Heart left ventricle (tissue), 16 donors: ENCODE measurements at regions of chr5 and their contacts with region 1.

Region 1: DNA sequence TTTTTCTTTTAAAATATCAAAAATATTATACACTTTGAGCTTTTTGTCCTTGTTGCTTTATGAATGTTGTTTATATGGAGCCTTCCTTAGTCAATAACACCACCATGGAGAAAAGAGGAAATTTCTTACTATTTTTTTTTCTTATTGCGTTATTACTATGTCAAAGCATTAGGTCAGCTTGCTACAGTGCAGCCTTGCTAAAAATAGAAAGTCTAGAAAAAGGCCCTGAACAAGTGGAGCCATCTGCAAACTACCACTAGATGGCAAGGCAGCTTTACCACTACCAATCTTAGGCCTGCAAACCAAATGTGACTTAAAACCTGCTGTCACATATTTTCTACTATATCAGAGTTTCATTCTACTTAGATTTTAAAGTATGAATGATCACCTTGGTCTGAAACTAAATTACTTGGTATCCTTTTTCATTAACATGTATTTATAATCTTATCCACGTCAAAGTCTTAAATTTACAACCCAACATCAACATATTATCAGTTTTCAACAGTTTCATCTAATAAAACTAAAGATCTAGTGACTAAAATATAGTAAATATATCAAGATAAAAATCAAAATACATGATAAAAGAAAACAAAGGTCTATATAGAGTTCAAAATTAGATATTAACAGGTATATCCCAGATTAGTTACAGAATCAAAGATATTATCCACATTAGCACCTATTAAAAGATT is 113.1 kb upstream of the ACOT12 start:
- DNase-seq: peak in 4 of 5 donors; percentile 46 to 71 (median 56)
- ATAC-seq: peak; percentile 98 to 100 (median 99)
- H3K4me3 ChIP-seq: peak overlapping the region in 1 of 12 donors; percentile 3
- H3K27ac ChIP-seq: peak overlapping the region in 10 of 12 donors; percentile 17 to 68 (median 40)
- H3K4me1 ChIP-seq: peaks cover 0 to 25% (median 16%) of the 10 kb centered on the region in 12 donors
- H3K27me3 ChIP-seq: no peaks in the 10 kb centered on the region
- CTCF ChIP-seq: peak; percentile 76 to 98 (median 84)
- POLR2A ChIP-seq: no peak

Region 2: DNA sequence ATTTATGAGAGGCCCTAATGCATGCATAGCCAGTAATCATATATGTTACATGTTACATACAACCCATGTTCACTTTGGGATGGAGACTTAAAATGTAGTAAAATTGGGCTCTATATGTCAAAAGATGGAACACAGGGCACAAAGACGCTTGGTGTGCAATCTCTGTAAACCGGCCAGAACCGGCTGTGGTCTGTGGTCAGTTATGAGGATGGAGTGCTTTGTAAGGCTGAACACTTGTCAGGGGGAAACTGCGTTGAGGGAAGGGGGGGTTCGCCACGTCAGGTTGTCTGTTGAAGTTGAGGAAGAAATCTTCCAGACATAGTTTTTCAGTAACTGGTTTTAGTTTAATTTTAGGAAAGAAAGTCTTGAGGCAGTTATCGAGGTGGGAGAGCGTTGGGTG is 276.6 kb before region 1 on chr5:
- intact Hi-C with region 1: no loop called
- DNase-seq: no peak
- ATAC-seq: no peak
- H3K4me3 ChIP-seq: no peak overlapping the region
- H3K27ac ChIP-seq: no peak overlapping the region
- H3K4me1 ChIP-seq: peaks cover 0 to 36% (median 22%) of the 10 kb centered on the region in 12 donors
- H3K27me3 ChIP-seq: no peaks in the 10 kb centered on the region
- CTCF ChIP-seq: no peak
- POLR2A ChIP-seq: no peak

Region 3: GRCh38 chr5:81425569-81425968 is 81.5 kb before region 1 on chr5:
- intact Hi-C with region 1: loop called in 1 of 10 experiments (anchors 5 kb)
- DNase-seq: no peak
- ATAC-seq: peak in 3 of 4 donors; percentile 35 to 62 (median 59)
- H3K4me3 ChIP-seq: no peak overlapping the region
- H3K27ac ChIP-seq: peak overlapping the region in 4 of 12 donors; percentile 1 to 28 (median 7)
- H3K4me1 ChIP-seq: peaks cover 4 to 26% (median 12%) of the 10 kb centered on the region in 12 donors
- H3K27me3 ChIP-seq: no peaks in the 10 kb centered on the region
- CTCF ChIP-seq: peak; percentile 56 to 82 (median 66)
- POLR2A ChIP-seq: no peak

Region 4: DNA sequence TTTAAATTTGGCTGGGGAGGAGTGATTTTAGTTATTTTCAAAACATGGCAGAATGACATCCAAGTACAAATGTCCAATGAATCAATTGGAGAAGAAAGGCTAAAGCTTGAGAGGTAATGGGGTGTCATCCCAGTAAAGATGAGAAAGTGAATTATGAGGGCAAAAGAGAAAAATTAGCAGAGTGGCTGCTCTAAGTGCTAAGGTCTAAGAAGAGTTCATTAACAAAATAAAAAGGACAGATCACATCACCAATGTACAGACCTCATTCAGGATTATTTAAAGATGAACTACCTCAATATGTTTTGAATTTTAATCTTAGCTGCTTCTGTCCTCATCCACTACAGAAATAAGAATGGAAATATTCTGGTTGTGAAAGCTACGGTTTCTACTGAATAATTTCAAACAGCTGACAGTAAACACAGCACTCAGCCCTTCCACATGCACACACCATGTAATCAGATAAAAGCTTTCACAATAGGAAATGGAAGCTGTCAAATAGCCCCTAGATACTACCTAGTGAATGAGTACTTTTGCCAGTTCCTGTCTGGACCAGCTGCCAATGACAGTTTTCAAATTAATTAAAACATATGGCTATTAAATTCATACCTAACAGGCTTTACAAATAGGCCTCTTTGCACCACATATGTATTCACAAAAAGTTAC is 72.3 kb after region 1 on chr5:
- intact Hi-C with region 1: no loop called
- DNase-seq: no peak
- ATAC-seq: peak in 3 of 4 donors; percentile 60 to 66 (median 66)
- H3K4me3 ChIP-seq: no peak overlapping the region
- H3K27ac ChIP-seq: no peak overlapping the region
- H3K4me1 ChIP-seq: peaks cover 0 to 15% (median 1%) of the 10 kb centered on the region in 12 donors
- H3K27me3 ChIP-seq: no peaks in the 10 kb centered on the region
- CTCF ChIP-seq: no peak
- POLR2A ChIP-seq: no peak

Region 5: DNA sequence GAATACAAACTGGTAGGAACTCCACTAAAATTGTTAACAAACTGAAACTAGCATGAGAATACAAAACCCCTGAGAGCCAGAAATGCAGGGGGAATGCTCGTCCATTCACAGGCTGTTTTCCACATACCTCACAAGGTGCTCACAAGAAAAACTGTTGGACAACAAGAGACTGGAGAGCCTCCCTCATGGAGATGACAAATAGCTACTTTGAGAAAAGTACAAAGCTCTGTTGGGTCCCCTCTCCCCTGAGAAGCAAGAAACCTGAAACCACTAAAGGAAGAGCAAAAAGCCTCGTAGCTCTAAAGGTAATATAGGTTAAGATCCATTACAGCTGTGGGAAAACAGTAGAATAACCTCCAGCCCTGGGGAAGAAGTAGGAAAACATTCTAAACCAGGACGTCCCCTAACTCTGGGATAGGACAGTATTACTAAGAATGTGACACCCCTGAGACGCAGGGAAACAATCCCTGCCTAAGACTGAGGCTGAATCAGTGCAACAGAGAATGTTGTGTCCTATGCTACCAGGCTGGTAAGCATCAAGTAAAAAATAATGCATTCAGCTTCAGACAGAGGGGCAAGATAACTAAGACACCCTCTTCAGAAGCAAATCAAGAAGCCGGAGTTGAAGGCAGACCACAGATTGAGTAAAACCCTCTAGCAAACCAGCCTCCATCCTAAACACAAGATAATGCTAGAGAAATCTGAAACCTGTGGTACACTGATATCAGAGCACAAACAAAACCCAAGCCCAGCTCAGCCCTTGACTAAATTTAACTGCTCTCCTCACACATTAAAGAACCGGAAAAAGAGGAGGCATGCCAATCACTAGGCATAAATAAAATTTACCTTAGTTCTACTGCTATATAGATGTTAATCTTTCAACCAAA is 83.7 kb after region 1 on chr5:
- intact Hi-C with region 1: no loop called
- DNase-seq: no peak
- ATAC-seq: peak; percentile 64 to 82 (median 72)
- H3K4me3 ChIP-seq: no peak overlapping the region
- H3K27ac ChIP-seq: peak overlapping the region in 3 of 12 donors; percentile 25 to 41 (median 40)
- H3K4me1 ChIP-seq: peaks cover 0 to 18% (median 0%) of the 10 kb centered on the region in 12 donors
- H3K27me3 ChIP-seq: no peaks in the 10 kb centered on the region
- CTCF ChIP-seq: no peak
- POLR2A ChIP-seq: no peak

Region 6: DNA sequence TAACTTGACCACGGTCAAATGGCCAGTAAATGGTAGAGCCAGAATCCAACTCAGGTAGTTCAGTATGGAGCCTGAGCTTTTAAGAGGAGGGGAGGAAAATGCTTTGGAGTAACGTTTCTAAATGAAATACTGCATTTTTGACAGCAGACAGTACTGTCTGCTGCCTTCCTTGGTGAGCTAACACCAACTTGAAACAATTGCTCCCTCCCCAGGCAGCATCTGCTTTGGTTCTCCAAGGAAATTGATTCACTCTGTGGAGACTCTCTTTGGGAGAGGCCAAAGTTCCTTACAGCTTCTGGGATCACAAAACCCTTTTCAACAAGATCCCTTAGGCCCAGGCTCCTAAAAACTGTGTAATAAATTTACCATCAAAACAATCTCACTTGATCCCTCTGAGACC is 319.1 kb after region 1 on chr5:
- intact Hi-C with region 1: loop called in 1 of 10 experiments (anchors 2 kb)
- DNase-seq: no peak
- ATAC-seq: no peak
- H3K4me3 ChIP-seq: no peak overlapping the region
- H3K27ac ChIP-seq: no peak overlapping the region
- H3K4me1 ChIP-seq: peaks cover 0 to 13% (median 4%) of the 10 kb centered on the region in 12 donors
- H3K27me3 ChIP-seq: no peaks in the 10 kb centered on the region
- CTCF ChIP-seq: no peak
- POLR2A ChIP-seq: no peak

Region 7: GRCh38 chr5:81851481-81852178 is 344.6 kb after region 1 on chr5:
- intact Hi-C with region 1: loop called in 9 of 10 experiments (anchors 2 to 10 kb)
- DNase-seq: peak; percentile 96 to 98 (median 97)
- ATAC-seq: peak; percentile 93 to 96 (median 94)
- H3K4me3 ChIP-seq: peak overlapping the region in 11 of 12 donors; percentile 23 to 71 (median 56)
- H3K27ac ChIP-seq: peak overlapping the region; percentile 80 to 99 (median 92)
- H3K4me1 ChIP-seq: peaks cover 0 to 79% (median 47%) of the 10 kb centered on the region in 12 donors
- H3K27me3 ChIP-seq: no peaks in the 10 kb centered on the region
- CTCF ChIP-seq: no peak
- POLR2A ChIP-seq: peak in 1 of 2 donors; percentile 58

Region 8: DNA sequence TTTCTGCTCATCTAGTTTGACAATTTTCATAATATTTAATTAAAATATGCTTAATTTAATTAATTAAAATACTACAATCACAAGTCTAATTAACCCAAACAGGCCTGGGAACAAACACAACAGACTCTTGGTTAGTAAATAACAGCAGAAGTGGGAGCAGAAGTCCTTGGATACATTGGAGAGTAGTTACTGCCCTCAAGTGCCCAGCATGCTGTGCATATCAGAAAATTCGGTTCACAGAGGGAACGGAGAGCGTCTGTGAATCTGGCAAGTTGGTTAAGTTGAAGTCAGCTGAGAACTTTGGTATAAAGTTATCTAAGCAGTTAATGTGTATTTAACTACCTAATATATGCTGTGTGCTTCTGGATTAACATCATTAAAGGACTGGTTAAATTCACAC is 377.8 kb after region 1 on chr5:
- intact Hi-C with region 1: loop called in 1 of 10 experiments (anchors 10 kb)
- DNase-seq: peak in 1 of 5 donors; percentile 9
- ATAC-seq: peak in 3 of 4 donors; percentile 63 to 75 (median 65)
- H3K4me3 ChIP-seq: no peak overlapping the region
- H3K27ac ChIP-seq: no peak overlapping the region
- H3K4me1 ChIP-seq: peaks cover 0 to 7% (median 0%) of the 10 kb centered on the region in 12 donors
- H3K27me3 ChIP-seq: no peaks in the 10 kb centered on the region
- CTCF ChIP-seq: peak in 9 of 12 donors; percentile 9 to 50 (median 38)
- POLR2A ChIP-seq: no peak

Region 9: DNA sequence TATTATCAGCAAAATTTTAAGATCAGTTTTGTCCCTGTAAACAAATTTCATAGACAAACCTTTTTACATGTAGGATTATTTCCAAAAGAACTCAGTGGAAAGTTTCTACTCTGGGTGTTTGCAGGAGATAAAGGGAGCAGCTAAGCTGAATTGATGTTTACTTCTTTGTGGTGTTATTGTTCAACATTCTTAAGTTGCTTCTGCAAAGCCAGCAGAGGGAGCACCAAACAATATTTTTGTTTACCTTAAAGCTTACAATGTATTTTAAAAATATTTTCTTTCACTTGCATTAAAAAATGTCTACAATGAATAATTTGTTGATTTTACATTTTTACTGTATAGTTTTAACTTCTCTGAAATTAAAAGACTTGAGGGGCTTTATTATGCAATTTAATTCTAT is 600.2 kb after region 1 on chr5:
- intact Hi-C with region 1: loop called in 1 of 10 experiments (anchors 10 kb)
- DNase-seq: no peak
- ATAC-seq: no peak
- H3K4me3 ChIP-seq: no peak overlapping the region
- H3K27ac ChIP-seq: peak overlapping the region in 1 of 12 donors; percentile 46
- H3K4me1 ChIP-seq: peaks cover 0 to 25% (median 16%) of the 10 kb centered on the region in 12 donors
- H3K27me3 ChIP-seq: no peaks in the 10 kb centered on the region
- CTCF ChIP-seq: peak in 10 of 12 donors; percentile 15 to 61 (median 46)
- POLR2A ChIP-seq: no peak

Region 10: DNA sequence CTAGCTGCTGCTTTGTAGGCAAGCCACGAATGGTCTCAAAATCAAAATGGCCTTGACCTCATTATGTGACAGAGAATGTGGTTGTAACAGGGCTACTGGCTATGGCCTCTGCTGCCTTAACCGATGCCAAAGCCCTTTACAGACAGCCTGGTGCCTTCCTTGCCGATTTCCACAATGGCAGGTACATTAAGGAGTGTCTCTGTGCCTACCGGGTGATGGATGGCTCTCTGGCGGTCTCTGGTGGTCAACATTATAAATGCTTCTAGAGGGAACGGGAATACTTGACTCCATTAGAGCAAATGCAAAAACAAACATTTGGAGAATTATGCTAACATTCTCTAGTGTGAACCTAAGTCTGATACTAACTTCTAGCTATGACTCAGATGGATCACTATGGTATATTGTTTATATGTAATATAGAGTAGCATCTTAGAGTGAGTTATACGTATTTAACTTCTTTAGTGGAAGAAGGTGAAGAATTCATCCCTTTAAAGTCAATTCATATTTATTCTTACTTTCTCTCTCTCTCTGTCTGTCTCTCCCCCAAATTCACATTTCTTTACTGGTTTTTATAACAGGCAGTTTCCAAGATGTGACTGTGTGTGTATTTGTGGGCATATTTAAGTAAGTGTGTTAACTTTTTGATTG is 718.6 kb after region 1 on chr5:
- intact Hi-C with region 1: loop called in 2 of 10 experiments (anchors 10 kb)
- DNase-seq: peak in 4 of 5 donors; percentile 15 to 49 (median 46)
- ATAC-seq: peak; percentile 67 to 84 (median 79)
- H3K4me3 ChIP-seq: no peak overlapping the region
- H3K27ac ChIP-seq: no peak overlapping the region
- H3K4me1 ChIP-seq: peaks cover 0 to 3% (median 0%) of the 10 kb centered on the region in 12 donors
- H3K27me3 ChIP-seq: no peaks in the 10 kb centered on the region
- CTCF ChIP-seq: peak; percentile 71 to 88 (median 81)
- POLR2A ChIP-seq: no peak